Breast epithelium (tissue), 4 donors: ENCODE measurements at regions of chr2 and their contacts with region 1.

Region 1: GRCh38 chr2:172535119-172535518 is 20.8 kb upstream of the PDK1 start:
- DNase-seq: no peak
- H3K4me3 ChIP-seq: no peak overlapping the region
- H3K27ac ChIP-seq: no peak overlapping the region
- H3K4me1 ChIP-seq: no peaks in the 10 kb centered on the region
- H3K27me3 ChIP-seq: no peaks in the 10 kb centered on the region
- CTCF ChIP-seq: no peak
- POLR2A ChIP-seq: no peak

Region 2: DNA sequence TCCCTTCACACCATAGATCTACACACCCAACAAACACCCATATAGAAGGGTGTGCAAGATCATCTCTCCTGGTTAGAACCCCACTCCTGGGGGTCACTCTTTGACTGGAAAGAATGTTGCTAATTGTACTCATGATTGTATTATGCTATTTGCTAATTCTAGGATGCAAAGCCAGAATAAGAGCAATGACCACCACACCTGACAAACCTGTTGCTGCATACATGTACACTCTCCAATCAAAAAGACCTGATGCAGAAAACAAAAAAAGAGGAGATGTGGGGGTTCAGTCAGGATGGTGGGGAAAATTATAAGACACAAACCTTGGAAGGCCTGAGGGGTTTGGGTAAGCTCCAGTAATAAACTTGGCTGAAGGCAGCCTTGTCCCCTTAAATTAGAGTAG is 16.1 kb before region 1 on chr2:
- intact Hi-C with region 1: no loop called
- DNase-seq: no peak
- H3K4me3 ChIP-seq: no peak overlapping the region
- H3K27ac ChIP-seq: no peak overlapping the region
- H3K4me1 ChIP-seq: no peaks in the 10 kb centered on the region
- H3K27me3 ChIP-seq: no peaks in the 10 kb centered on the region
- CTCF ChIP-seq: no peak
- POLR2A ChIP-seq: no peak

Region 3: GRCh38 chr2:172549058-172549457 is 13.9 kb after region 1 on chr2:
- intact Hi-C with region 1: loop called (anchors 1 kb)
- DNase-seq: no peak
- H3K4me3 ChIP-seq: no peak overlapping the region
- H3K27ac ChIP-seq: no peak overlapping the region
- H3K4me1 ChIP-seq: no peaks in the 10 kb centered on the region
- H3K27me3 ChIP-seq: no peaks in the 10 kb centered on the region
- CTCF ChIP-seq: no peak
- POLR2A ChIP-seq: no peak